ENCODE measurements at regions of chr15 and their contacts with region 1.

Region 1: DNA sequence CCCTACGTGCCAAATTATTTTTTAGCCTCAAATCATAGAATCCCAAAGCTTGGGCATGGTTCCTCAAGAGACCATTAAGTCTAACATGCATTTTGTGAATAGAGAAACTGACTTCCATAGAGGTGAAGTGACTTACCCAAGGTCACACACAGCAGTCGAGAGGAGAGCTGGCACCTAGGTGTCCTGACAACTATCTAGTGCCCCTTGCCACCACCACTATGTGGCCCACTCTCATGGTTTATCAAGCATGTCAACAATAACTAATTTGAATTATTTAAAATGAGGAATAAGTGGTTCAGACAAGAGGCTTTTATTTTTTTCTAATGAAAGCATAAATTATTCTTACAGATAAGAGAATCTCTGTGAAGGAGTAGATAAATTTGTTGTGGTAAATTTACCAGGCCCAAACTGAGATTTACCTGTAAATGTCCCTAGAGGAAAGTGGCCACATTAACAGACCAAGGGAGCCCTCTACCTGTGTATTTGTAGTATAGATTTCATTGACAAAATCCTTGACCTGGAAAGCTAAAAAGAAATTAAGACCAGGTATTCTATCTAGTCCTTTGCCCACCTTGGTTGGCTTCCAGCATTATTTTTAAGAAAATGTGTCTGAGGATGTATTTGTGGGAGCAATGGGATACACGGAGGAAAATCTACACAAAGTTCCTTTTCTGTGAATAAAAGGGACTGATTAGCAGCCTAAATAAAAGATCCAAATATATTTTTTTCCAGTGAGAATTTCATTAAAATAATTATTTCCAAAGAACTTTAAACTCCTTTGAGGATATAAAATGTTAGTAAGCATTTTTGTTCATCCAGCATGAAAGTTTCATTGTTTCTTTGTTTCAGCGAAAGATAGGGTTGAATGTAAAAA is 49.1 kb downstream of the IQCH start:
- DNase-seq: no peak
- H3K4me3 ChIP-seq: no peak overlapping the region
- H3K27ac ChIP-seq: no peak overlapping the region
- H3K4me1 ChIP-seq: no peaks in the 10 kb centered on the region
- H3K27me3 ChIP-seq: no peaks in the 10 kb centered on the region
- CTCF ChIP-seq: peak; percentile 68

Region 2: GRCh38 chr15:66946578-66947164 is 357.1 kb before region 1 on chr15:
- intact Hi-C with region 1: loop called (anchors 5 kb)
- DNase-seq: peak; percentile 68
- H3K4me3 ChIP-seq: no peak overlapping the region
- H3K27ac ChIP-seq: no peak overlapping the region
- H3K4me1 ChIP-seq: peaks cover 1% of the 10 kb centered on the region
- H3K27me3 ChIP-seq: no peaks in the 10 kb centered on the region
- CTCF ChIP-seq: peak; percentile 95

Region 3: GRCh38 chr15:67134067-67134838 is 169.5 kb before region 1 on chr15:
- intact Hi-C with region 1: no loop called
- DNase-seq: no peak
- H3K4me3 ChIP-seq: peak overlapping the region; percentile 20
- H3K27ac ChIP-seq: peak overlapping the region; percentile 79
- H3K4me1 ChIP-seq: peaks cover 88% of the 10 kb centered on the region
- H3K27me3 ChIP-seq: no peaks in the 10 kb centered on the region
- CTCF ChIP-seq: no peak

Measured in left ventricle myocardium inferior (tissue), 1 donor.